Heart left ventricle (tissue), 16 donors: ENCODE measurements at regions of chr2 and their contacts with region 1.

Region 1: DNA sequence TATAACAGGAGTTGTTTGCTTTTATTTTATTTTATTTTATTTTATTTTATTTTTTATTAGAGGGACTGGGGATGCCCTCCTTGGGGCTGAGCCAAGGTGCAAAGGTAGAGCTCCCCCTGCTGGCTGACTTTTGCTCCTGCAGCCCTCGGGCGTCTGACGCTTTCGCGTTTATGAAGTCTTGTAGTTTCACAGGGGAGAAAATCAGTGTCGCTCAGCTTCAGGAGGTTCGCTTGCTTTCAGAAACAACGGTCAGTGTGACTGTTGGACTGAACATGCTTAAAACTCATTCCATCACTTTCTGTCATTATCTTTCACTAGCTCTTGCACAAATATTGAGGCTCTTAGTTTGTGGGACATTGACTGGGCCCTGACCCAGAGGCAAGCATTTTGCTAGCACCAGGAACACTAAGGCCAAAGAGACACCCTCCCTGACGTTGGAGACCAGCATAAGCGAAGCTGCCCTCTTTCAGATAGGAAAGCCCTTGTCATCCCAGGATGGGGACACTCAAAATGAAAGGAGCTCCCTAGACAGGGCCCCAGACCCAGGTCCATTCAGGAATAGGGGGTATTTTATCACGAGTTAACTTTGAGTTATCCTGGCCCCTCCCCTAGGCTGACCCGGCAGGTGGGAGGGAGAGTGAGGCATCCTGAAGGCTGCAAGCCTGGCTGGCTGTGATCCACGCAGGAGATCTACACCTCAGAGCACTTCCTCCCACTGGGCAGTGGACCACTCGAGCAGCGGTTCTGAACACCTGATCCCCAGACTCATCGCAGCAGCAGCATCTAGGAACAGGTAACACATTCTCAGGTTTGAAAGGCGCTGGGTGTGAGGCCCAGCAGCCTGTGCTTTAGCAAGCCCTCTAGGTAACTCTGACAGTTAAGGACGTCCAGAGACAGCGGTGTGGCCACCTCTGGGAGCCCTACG is 34.4 kb downstream of the LGALSL start:
- DNase-seq: peak; percentile 52 to 84 (median 68)
- ATAC-seq: peak; percentile 48 to 76 (median 64)
- H3K4me3 ChIP-seq: no peak overlapping the region
- H3K27ac ChIP-seq: no peak overlapping the region
- H3K4me1 ChIP-seq: peaks cover 0 to 25% (median 8%) of the 10 kb centered on the region in 12 donors
- H3K27me3 ChIP-seq: peaks cover 0 to 3% (median 0%) of the 10 kb centered on the region in 9 donors
- CTCF ChIP-seq: peak; percentile 94 to 99 (median 98)
- POLR2A ChIP-seq: no peak

Region 2: GRCh38 chr2:64040161-64040560 is 448.2 kb before region 1 on chr2:
- intact Hi-C with region 1: loop called in 7 of 10 experiments (anchors 2 to 10 kb)
- DNase-seq: no peak
- ATAC-seq: no peak
- H3K4me3 ChIP-seq: no peak overlapping the region
- H3K27ac ChIP-seq: no peak overlapping the region
- H3K4me1 ChIP-seq: peaks cover 0 to 23% (median 0%) of the 10 kb centered on the region in 12 donors
- H3K27me3 ChIP-seq: no peaks in the 10 kb centered on the region
- CTCF ChIP-seq: no peak
- POLR2A ChIP-seq: no peak

Region 3: GRCh38 chr2:64045938-64046337 is 442.4 kb before region 1 on chr2:
- intact Hi-C with region 1: loop called (anchors 2 to 10 kb)
- DNase-seq: no peak
- ATAC-seq: no peak
- H3K4me3 ChIP-seq: no peak overlapping the region
- H3K27ac ChIP-seq: no peak overlapping the region
- H3K4me1 ChIP-seq: peaks cover 0 to 7% (median 0%) of the 10 kb centered on the region in 12 donors
- H3K27me3 ChIP-seq: no peaks in the 10 kb centered on the region
- CTCF ChIP-seq: no peak
- POLR2A ChIP-seq: no peak

Region 4: GRCh38 chr2:64383016-64383591 is 105.2 kb before region 1 on chr2:
- intact Hi-C with region 1: no loop called
- DNase-seq: no peak
- ATAC-seq: peak in 2 of 4 donors; percentile 32 to 57
- H3K4me3 ChIP-seq: no peak overlapping the region
- H3K27ac ChIP-seq: no peak overlapping the region
- H3K4me1 ChIP-seq: no peaks in the 10 kb centered on the region
- H3K27me3 ChIP-seq: peaks cover 0 to 17% (median 0%) of the 10 kb centered on the region in 9 donors
- CTCF ChIP-seq: no peak
- POLR2A ChIP-seq: no peak

Region 5: GRCh38 chr2:64404002-64404731 is 84.1 kb before region 1 on chr2:
- intact Hi-C with region 1: loop called in 2 of 10 experiments (anchors 5 to 10 kb)
- DNase-seq: peak; percentile 89 to 92 (median 90)
- ATAC-seq: peak; percentile 89 to 94 (median 94)
- H3K4me3 ChIP-seq: peak overlapping the region in 8 of 12 donors; percentile 2 to 29 (median 6)
- H3K27ac ChIP-seq: peak overlapping the region; percentile 71 to 97 (median 86)
- H3K4me1 ChIP-seq: peaks cover 8 to 49% (median 36%) of the 10 kb centered on the region in 12 donors
- H3K27me3 ChIP-seq: no peaks in the 10 kb centered on the region
- CTCF ChIP-seq: no peak
- POLR2A ChIP-seq: no peak

Region 6: GRCh38 chr2:64453770-64454385 is 34.4 kb before region 1 on chr2 and contains the start of gene LGALSL:
- intact Hi-C with region 1: loop called in 1 of 10 experiments (anchors 5 kb)
- DNase-seq: peak; percentile 81 to 89 (median 82)
- ATAC-seq: peak; percentile 68 to 91 (median 89)
- H3K4me3 ChIP-seq: peak within 1 kb of the TSS; percentile 74 to 93 (median 80)
- H3K27ac ChIP-seq: peak within 1 kb of the TSS; percentile 87 to 98 (median 94)
- H3K4me1 ChIP-seq: peaks cover 0 to 38% (median 18%) of the 10 kb centered on the region in 12 donors
- H3K27me3 ChIP-seq: peaks cover 0 to 11% (median 0%) of the 10 kb centered on the region in 9 donors
- CTCF ChIP-seq: no peak
- POLR2A ChIP-seq: peak in 1 of 2 donors; percentile 70
- total RNA-seq, gene LGALSL: 6.4 to 31.6 (median 11.8) TPM

Region 7: DNA sequence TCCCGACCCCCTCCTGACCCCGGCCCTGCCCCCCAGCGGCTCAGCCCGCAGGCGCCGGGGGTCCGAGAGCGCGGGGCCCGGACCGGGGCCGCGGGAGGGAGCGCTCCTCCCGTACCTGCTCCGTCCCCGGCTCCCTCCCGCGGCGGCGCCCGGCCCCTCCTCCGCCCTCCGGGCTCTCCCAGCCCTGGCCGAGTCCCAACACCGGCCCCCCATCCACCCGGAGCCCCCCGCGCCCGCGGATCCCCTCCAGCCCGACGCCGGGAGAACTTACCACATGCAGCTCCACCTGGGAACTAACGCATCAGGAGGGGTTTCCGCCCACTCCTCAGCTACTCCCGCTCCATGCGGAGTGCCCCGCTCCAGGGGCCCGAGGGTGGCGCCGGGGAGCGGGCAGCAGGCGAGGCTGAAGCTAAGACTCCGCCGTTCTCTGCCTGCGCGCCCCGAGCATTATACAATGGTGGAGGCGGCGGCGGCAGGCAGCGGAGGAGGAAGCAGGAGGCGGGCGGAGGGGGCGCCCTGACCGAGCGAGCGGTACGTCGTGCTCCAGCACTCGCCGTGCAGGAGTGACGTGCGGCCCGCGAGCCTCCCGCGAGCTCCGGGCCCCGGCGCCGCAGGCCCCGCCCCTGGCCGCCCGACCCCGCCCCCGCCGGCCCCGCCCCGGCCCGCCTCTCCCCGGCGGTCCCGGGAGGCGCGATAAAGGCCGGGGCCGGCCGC is 165.2 kb after region 1 on chr2 and contains the start of gene SERTAD2:
- intact Hi-C with region 1: no loop called
- DNase-seq: peak; percentile 91 to 96 (median 93)
- ATAC-seq: peak; percentile 75 to 93 (median 91)
- H3K4me3 ChIP-seq: peak within 1 kb of the TSS; percentile 74 to 95 (median 90)
- H3K27ac ChIP-seq: peak within 1 kb of the TSS; percentile 96 to 100 (median 99)
- H3K4me1 ChIP-seq: peaks cover 0 to 69% (median 41%) of the 10 kb centered on the region in 12 donors
- H3K27me3 ChIP-seq: no peaks in the 10 kb centered on the region
- CTCF ChIP-seq: peak in 5 of 12 donors; percentile 7 to 34 (median 16)
- POLR2A ChIP-seq: peak in 1 of 2 donors; percentile 79
- total RNA-seq, gene SERTAD2: 12.2 to 21.6 (median 16.1) TPM